ENCODE measurements at regions of chr11 and their contacts with region 1.

Region 1: DNA sequence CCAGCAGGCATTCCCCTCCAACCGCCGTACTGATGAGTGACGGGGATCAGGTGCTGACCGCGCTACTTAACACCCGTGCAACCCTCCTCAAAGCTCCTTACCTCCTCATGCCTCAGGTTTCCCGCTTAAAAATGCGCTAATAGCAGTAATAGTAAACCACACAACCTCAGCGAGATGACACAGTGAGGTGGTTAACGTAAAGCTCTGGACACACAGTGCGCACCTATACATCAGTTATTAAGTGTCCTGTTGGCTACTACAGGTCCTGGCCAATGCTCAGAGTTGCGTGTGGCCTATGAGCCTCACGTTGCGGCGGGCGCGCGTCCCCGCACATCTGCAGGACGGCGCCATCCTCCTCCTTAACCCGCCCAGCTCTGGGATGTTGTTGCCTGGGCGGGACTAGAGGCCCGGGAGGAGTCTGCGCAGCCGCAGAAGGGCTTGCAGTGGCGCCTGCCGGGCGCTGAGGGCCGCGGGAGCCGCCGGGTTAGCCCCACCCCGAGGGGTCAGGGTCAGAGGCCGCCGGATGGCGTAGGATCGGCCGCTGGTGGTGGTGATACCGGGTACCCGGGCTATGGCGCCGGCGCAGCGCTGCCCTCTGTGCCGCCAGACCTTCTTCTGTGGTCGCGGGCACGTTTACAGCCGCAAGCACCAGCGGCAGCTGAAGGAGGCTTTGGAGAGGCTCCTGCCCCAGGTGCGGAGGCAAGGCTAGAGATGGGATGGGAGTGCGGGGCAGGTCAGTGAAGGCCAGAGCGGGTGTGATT is at the start of gene CENATAC:
- DNase-seq: peak; percentile 94
- ATAC-seq: peak; percentile 95
- H3K4me3 ChIP-seq: peak within 1 kb of the TSS; percentile 76 to 90 (median 82)
- H3K4me3 Mint-ChIP-seq: peak within 1 kb of the TSS; percentile 99
- H3K27ac ChIP-seq: peak within 1 kb of the TSS; percentile 52 to 77
- H3K27ac Mint-ChIP-seq: peak within 1 kb of the TSS; percentile 94
- H3K4me1 ChIP-seq: peaks cover 17 to 22% of the 10 kb centered on the region in 2 donors
- H3K4me1 Mint-ChIP-seq: peaks cover 35% of the 10 kb centered on the region
- H3K27me3 ChIP-seq: no peaks in the 10 kb centered on the region
- H3K27me3 Mint-ChIP-seq: no peaks in the 10 kb centered on the region
- CTCF ChIP-seq: no peak
- total RNA-seq, gene CENATAC: 122 and 138 TPM in 2 replicates

Region 2: DNA sequence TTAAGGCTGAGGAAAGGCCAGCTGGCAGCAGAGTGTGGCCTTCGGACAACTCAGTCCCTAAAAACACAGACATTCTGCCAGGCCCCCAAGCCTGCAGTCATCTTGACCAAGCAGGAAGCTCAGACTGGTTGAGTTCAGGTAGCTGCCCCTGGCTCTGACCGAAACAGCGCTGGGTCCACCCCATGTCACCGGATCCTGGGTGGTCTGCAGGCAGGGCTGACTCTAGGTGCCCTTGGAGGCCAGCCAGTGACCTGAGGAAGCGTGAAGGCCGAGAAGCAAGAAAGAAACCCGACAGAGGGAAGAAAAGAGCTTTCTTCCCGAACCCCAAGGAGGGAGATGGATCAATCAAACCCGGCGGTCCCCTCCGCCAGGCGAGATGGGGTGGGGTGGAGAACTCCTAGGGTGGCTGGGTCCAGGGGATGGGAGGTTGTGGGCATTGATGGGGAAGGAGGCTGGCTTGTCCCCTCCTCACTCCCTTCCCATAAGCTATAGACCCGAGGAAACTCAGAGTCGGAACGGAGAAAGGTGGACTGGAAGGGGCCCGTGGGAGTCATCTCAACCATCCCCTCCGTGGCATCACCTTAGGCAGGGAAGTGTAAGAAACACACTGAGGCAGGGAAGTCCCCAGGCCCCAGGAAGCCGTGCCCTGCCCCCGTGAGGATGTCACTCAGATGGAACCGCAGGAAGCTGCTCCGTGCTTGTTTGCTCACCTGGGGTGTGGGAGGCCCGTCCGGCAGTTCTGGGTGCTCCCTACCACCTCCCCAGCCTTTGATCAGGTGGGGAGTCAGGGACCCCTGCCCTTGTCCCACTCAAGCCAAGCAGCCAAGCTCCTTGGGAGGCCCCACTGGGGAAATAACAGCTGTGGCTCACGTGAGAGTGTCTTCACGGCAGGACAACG is 102.4 kb before region 1 on chr11:
- CTCF ChIA-PET with region 1: no interaction called
- POLR2A ChIA-PET with region 1: no interaction called
- intact Hi-C with region 1: no loop called
- DNase-seq: peak; percentile 91
- ATAC-seq: peak; percentile 59
- H3K4me3 ChIP-seq: peak overlapping the region in 4 of 5 experiments; percentile 28 to 51 (median 44)
- H3K4me3 Mint-ChIP-seq: peak overlapping the region; percentile 79
- H3K27ac ChIP-seq: peak overlapping the region; percentile 95 to 99
- H3K27ac Mint-ChIP-seq: peak overlapping the region; percentile 86
- H3K4me1 ChIP-seq: peaks cover 73 to 83% of the 10 kb centered on the region in 2 donors
- H3K4me1 Mint-ChIP-seq: peaks cover 83% of the 10 kb centered on the region
- H3K27me3 ChIP-seq: no peaks in the 10 kb centered on the region
- H3K27me3 Mint-ChIP-seq: no peaks in the 10 kb centered on the region
- CTCF ChIP-seq: no peak

Region 3: GRCh38 chr11:118979434-118979833 is 18.4 kb before region 1 on chr11:
- CTCF ChIA-PET with region 1: no interaction called
- POLR2A ChIA-PET with region 1: no interaction called
- intact Hi-C with region 1: no loop called
- DNase-seq: no peak
- ATAC-seq: no peak
- H3K4me3 ChIP-seq: no peak overlapping the region
- H3K4me3 Mint-ChIP-seq: no peak overlapping the region
- H3K27ac ChIP-seq: no peak overlapping the region
- H3K27ac Mint-ChIP-seq: no peak overlapping the region
- H3K4me1 ChIP-seq: no peaks in the 10 kb centered on the region
- H3K4me1 Mint-ChIP-seq: no peaks in the 10 kb centered on the region
- H3K27me3 ChIP-seq: peaks cover 0 to 27% (median 4%) of the 10 kb centered on the region in 4 experiments
- H3K27me3 Mint-ChIP-seq: peaks cover 33% of the 10 kb centered on the region
- CTCF ChIP-seq: no peak

Region 4: GRCh38 chr11:119030329-119031049 is 32.7 kb after region 1 on chr11 and contains the start of gene SLC37A4:
- CTCF ChIA-PET with region 1: interaction called, 3 read pairs
- POLR2A ChIA-PET with region 1: no interaction called
- intact Hi-C with region 1: loop called (anchors 1 kb)
- DNase-seq: peak; percentile 99
- ATAC-seq: peak; percentile 96
- H3K4me3 ChIP-seq: peak within 1 kb of the TSS in 4 of 5 experiments; percentile 80 to 89 (median 86)
- H3K4me3 Mint-ChIP-seq: peak within 1 kb of the TSS; percentile 92
- H3K27ac ChIP-seq: peak within 1 kb of the TSS; percentile 46 to 74
- H3K27ac Mint-ChIP-seq: peak within 1 kb of the TSS; percentile 82
- H3K4me1 ChIP-seq: peaks cover 4 to 10% of the 10 kb centered on the region in 2 donors
- H3K4me1 Mint-ChIP-seq: peaks cover 20% of the 10 kb centered on the region
- H3K27me3 ChIP-seq: no peaks in the 10 kb centered on the region
- H3K27me3 Mint-ChIP-seq: no peaks in the 10 kb centered on the region
- CTCF ChIP-seq: no peak
- total RNA-seq, gene SLC37A4: 13.2 and 14.3 TPM in 2 replicates

Region 5: GRCh38 chr11:119044708-119045107 is 46.9 kb after region 1 on chr11:
- CTCF ChIA-PET with region 1: no interaction called
- POLR2A ChIA-PET with region 1: interaction called, 11 read pairs
- intact Hi-C with region 1: no loop called
- DNase-seq: no peak
- ATAC-seq: no peak
- H3K4me3 ChIP-seq: no peak overlapping the region
- H3K4me3 Mint-ChIP-seq: no peak overlapping the region
- H3K27ac ChIP-seq: no peak overlapping the region
- H3K27ac Mint-ChIP-seq: no peak overlapping the region
- H3K4me1 ChIP-seq: peaks cover 0 to 2% of the 10 kb centered on the region in 2 donors
- H3K4me1 Mint-ChIP-seq: peaks cover under 1% of the 10 kb centered on the region
- H3K27me3 ChIP-seq: no peaks in the 10 kb centered on the region
- H3K27me3 Mint-ChIP-seq: no peaks in the 10 kb centered on the region
- CTCF ChIP-seq: peak; percentile 10